Heart left ventricle (tissue), 16 donors: ENCODE measurements at regions of chr5 and their contacts with region 1.

Region 1: DNA sequence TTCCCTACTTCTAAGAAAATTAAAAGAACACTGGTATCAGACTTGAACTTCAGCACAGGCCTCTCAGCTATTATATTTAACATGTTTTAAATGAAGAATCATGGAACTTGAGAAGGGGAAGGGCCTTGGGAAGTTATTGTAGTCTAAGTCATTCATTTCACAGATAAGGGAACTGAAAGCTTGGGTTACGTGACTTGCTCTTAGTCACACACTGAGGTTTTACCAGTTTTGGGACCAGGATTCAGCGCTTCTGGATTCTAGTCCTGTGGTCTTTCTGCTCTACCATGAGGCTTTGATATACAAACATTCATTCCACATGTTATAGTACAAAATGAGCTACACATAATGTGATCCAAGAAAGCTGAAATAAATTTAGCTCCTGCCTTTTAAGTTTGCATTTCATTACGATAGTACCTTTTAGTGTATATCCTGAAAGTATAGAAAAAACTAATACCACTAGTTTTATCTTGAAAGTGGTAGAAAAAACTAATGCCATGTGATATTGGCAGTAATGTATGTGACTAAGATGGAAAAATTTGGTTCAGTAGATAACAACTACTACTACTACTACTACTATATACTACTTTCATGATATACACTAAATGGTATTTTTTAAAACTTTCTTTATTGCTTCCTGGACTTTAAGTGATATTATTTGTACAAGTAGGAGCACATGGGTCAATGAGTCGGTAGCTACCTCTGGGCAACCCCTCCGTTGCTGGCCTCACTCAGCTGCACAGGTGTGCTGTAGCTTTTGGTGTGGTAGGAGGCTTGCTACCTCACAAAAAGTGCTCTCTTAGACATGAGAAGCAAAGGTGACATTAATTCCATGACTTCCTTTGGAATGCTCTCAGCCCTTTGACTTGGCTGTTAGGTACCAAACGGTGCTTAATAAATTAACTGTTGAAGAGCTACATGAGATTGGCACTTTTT is 40.7 kb downstream of the F2RL2 start:
- DNase-seq: peak in 1 of 5 donors; percentile 13
- ATAC-seq: peak in 2 of 4 donors; percentile 39 to 58
- H3K4me3 ChIP-seq: no peak overlapping the region
- H3K27ac ChIP-seq: peak overlapping the region in 2 of 12 donors; percentile 7 to 74
- H3K4me1 ChIP-seq: peaks cover 0 to 28% (median 0%) of the 10 kb centered on the region in 12 donors
- H3K27me3 ChIP-seq: peaks cover 0 to 11% (median 0%) of the 10 kb centered on the region in 9 donors
- CTCF ChIP-seq: no peak
- POLR2A ChIP-seq: no peak

Region 2: GRCh38 chr5:76337953-76338451 is 244.5 kb before region 1 on chr5:
- intact Hi-C with region 1: loop called in 1 of 10 experiments (anchors 5 kb)
- DNase-seq: no peak
- ATAC-seq: peak in 3 of 4 donors; percentile 45 to 55 (median 54)
- H3K4me3 ChIP-seq: no peak overlapping the region
- H3K27ac ChIP-seq: no peak overlapping the region
- H3K4me1 ChIP-seq: peaks cover 0 to 28% (median 0%) of the 10 kb centered on the region in 12 donors
- H3K27me3 ChIP-seq: no peaks in the 10 kb centered on the region
- CTCF ChIP-seq: peak in 11 of 12 donors; percentile 16 to 41 (median 24)
- POLR2A ChIP-seq: no peak

Region 3: GRCh38 chr5:76402886-76403765 is 179.4 kb before region 1 on chr5 and contains the start of gene IQGAP2:
- intact Hi-C with region 1: loop called in 1 of 10 experiments (anchors 10 kb)
- DNase-seq: peak; percentile 65 to 90 (median 74)
- ATAC-seq: peak; percentile 76 to 90 (median 86)
- H3K4me3 ChIP-seq: peak within 1 kb of the TSS; percentile 50 to 73 (median 60)
- H3K27ac ChIP-seq: peak within 1 kb of the TSS; percentile 13 to 96 (median 60)
- H3K4me1 ChIP-seq: peaks cover 0 to 52% (median 10%) of the 10 kb centered on the region in 12 donors
- H3K27me3 ChIP-seq: peaks cover 0 to 46% (median 13%) of the 10 kb centered on the region in 9 donors
- CTCF ChIP-seq: peak; percentile 39 to 86 (median 64)
- POLR2A ChIP-seq: peak in 1 of 2 donors; percentile 13
- total RNA-seq, gene IQGAP2: 3.4 to 35.4 (median 7.0) TPM

Region 4: DNA sequence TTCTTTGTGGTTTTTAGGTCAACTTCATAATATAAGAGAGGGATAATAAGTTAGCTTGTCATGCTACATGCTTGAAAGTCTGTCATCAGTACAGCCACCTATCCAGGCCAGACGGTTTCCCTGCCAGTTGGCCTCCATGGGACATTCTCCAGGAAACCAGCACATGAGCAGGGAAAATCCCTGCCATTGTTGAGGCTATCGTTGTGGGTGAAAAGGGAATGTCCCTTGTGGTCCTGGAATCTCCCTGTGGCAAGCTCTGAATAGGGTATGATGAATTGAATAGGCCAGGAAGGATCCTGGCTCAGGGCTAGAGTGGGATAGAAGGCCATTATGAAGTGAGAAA is 248.6 kb after region 1 on chr5:
- intact Hi-C with region 1: no loop called
- DNase-seq: no peak
- ATAC-seq: peak in 2 of 4 donors; percentile 27 to 66
- H3K4me3 ChIP-seq: no peak overlapping the region
- H3K27ac ChIP-seq: no peak overlapping the region
- H3K4me1 ChIP-seq: peaks cover 0 to 6% (median 0%) of the 10 kb centered on the region in 12 donors
- H3K27me3 ChIP-seq: no peaks in the 10 kb centered on the region
- CTCF ChIP-seq: no peak
- POLR2A ChIP-seq: no peak